ENCODE measurements at regions of chr18 and their contacts with region 1.

Region 1: DNA sequence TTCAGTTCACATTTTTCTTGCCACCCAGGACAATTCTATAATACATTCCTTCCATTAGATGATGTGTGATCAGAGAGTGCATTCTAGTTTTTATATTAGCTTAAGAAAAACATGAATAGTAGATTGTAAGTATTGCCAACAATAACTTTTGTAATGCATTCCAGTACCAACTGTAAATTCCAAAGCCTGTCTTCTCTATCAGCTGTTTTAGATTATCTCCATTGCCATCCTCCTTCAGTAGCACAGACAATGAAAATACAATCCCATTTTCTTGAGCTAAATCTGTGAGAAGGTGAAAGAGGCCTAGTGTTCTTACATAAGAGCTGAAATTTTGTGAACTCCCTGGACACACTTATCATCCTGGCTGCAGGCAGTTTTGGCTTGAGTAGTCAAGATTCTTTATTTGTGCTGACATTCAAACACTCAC is 103.9 kb downstream of the CCBE1 start:
- DNase-seq: no peak
- H3K4me3 ChIP-seq: no peak overlapping the region
- H3K27ac ChIP-seq: no peak overlapping the region
- H3K4me1 ChIP-seq: no peaks in the 10 kb centered on the region
- H3K27me3 ChIP-seq: no peaks in the 10 kb centered on the region
- CTCF ChIP-seq: no peak

Region 2: GRCh38 chr18:58947136-58947732 is 646.1 kb before region 1 on chr18:
- CTCF ChIA-PET with region 1: no interaction called
- dilution Hi-C with region 1: no loop called
- in situ Hi-C with region 1: no loop called
- intact Hi-C with region 1: no loop called
- DNase-seq: no peak
- H3K4me3 ChIP-seq: no peak overlapping the region
- H3K27ac ChIP-seq: no peak overlapping the region
- H3K4me1 ChIP-seq: no peaks in the 10 kb centered on the region
- H3K27me3 ChIP-seq: no peaks in the 10 kb centered on the region
- CTCF ChIP-seq: no peak

Region 3: DNA sequence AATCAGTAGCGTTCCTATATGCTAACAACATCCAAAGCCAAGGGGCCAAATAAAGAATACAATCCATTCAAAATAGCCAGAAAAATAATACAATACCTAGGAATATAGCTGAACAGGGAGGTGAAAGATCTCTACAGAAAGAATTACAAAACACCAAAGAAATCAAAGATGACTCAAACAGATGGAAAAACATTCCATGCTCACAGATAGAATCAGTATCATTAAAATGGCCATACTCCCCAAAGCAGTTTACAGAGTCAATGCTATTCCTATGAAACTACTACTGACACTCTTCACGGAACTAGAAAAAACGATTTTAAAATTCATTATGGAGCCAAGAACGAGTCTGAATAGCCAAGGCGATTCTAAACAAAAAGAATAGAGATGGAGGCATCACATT is 46.5 kb after region 1 on chr18:
- CTCF ChIA-PET with region 1: no interaction called
- dilution Hi-C with region 1: no loop called
- in situ Hi-C with region 1: no loop called
- intact Hi-C with region 1: loop called (anchors 5 kb)
- DNase-seq: no peak
- H3K4me3 ChIP-seq: no peak overlapping the region
- H3K27ac ChIP-seq: no peak overlapping the region
- H3K4me1 ChIP-seq: no peaks in the 10 kb centered on the region
- H3K27me3 ChIP-seq: no peaks in the 10 kb centered on the region
- CTCF ChIP-seq: no peak

Region 4: DNA sequence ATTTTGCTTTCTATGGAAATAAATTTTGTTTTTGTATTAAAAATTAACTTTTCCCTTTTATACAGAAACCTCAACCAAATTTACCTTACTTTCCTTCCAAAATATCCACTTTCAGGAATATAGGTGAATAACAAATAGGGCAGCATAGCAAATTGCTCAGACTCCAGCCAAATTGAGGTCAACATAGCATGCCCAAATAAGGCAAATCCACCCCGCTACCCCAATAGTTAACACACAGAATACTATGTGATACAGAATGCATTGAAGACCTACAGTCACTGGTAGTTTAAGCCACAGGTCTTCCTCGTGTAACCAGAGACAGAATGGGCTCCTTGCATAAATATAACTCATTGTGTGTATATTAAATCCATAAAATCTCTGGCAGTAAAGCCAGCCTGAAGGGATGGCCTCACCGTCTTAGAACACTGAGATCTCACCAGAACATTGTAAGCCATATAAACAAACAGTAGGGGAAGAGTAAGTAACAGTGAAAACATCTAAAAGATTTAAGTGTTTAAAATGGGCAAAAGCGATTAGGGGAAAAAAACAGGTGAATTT is 378.6 kb after region 1 on chr18:
- CTCF ChIA-PET with region 1: no interaction called
- dilution Hi-C with region 1: no loop called
- in situ Hi-C with region 1: no loop called
- intact Hi-C with region 1: no loop called
- DNase-seq: no peak
- H3K4me3 ChIP-seq: no peak overlapping the region
- H3K27ac ChIP-seq: no peak overlapping the region
- H3K4me1 ChIP-seq: peaks cover 8% of the 10 kb centered on the region
- H3K27me3 ChIP-seq: no peaks in the 10 kb centered on the region
- CTCF ChIP-seq: no peak

Measured in mammary epithelial cell (primary cell).